RWPE1 (cell line): ENCODE measurements at regions of chr2 and their contacts with region 1.

Region 1: DNA sequence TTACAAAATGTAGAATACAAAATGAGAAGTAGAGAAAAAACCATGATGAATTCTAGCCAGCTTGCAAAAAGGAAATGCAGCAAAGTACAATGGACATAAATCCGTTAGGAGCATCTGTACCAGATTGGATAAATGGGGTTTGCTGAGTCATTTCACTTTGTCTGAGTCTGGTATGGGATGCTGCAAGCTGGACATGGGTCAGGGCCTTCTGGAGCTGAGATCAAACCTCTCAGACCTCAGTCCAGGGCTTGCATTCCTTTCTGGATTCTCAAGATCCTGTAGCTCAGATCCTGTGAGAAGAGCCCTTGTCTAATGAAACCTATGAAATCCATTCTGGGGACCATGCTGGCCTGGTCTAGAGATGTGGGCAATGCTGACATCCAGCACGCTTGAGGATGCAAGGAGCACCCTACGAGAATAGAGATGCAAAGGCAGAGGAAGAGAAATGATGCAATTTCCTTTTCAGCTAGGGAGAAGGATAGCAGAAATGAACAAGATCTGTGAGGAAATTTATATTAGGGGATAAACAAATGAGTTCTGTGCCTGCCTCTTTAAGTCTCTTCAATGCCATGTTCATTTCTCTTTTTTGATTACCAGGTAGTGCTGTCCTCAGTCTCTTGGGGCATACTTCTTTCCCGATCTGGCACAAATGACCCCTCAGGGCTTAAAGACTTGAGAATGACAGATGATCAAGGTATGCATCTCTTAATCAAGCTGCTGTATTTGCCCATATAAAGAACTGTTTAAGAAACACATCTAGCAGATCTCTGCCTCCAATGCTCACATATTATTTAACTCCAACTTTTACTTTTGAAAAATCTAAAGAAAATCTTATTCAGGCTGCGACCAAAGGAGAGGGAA is 230.4 kb downstream of the MEIS1 start:
- DNase-seq: peak; percentile 24
- H3K27ac ChIP-seq: no peak overlapping the region
- CTCF ChIP-seq: no peak

Region 2: GRCh38 chr2:66587216-66587615 is 78.1 kb before region 1 on chr2:
- CTCF ChIA-PET with region 1: no interaction called
- POLR2A ChIA-PET with region 1: no interaction called
- DNase-seq: no peak
- H3K27ac ChIP-seq: no peak overlapping the region
- CTCF ChIP-seq: no peak

Region 3: DNA sequence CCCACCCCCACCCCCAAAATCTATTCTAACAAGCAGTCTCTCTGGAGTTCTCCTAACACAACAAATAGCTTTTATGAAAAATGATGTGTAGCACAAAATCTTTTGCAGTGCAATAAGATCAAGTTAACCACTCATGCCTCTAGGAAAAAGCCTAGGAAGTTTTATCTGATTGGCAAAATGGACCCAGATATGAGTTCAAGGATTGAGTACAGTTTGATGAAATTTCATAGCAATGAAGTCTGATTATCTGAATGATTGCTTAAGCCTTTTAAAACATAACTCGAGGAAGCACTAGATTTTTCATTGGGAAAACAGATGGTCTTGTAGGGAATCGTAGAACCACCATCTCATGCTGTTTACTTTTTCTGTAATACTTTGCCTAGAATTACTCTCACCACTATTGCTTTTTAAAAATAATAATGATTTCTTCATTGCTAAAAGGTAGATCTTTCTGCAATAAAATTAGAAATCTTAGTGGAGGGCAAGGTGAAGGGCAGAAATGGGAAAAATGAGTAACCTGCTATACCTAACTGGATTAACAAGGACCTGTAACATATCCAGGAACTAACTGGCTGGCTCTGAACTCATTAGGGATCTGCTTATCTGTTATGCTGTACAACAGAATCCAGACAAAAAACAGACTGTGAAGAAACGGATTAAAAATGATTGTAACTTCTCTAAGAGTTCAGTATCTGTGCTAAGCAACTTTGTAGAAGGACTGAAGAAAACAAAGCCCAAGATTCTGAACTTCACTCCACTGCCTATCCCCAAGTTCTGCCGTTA is 658.0 kb after region 1 on chr2:
- CTCF ChIA-PET with region 1: interaction called, 10 read pairs
- POLR2A ChIA-PET with region 1: no interaction called
- DNase-seq: no peak
- H3K27ac ChIP-seq: no peak overlapping the region
- CTCF ChIP-seq: no peak